Ovary (tissue), 10 donors: ENCODE measurements at regions of chr10 and their contacts with region 1.

Region 1: DNA sequence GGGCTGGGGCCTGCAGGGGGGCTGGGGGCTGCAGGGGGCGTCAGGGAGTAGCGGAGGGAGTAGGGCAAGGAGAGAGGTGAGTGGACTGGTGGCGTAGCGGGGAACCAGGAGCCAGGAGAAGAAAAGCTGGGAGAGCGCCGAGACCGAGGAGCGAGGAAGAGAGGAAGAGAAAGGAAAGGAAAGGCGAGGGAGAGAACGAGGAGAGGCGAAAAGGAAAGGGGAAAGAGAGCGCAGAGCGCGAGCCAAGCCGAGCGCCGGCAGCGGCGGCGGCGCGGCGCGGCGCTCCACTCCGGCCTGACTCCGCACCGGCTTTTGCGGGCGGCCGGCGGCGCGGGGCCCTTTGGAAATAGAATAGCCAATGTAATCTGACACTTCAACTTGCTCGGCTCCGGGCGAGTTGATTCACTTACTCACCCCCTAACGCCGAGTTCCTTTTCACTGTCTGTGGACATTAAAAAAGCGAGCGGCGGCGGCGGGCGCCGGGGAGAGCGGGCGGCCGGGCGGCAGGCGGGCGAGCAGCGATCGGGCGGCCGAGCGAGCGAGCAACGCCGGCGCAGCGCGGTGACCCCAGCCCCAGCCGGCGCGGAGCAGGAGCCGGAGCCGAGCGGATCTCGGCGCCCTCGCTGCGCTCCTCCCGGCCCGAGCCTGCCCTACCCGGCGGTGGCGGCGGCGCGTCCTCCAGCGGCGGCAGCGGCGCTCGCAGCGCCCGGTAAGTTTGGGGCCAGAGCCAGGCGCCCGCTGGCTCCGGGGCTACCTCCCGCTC is at the start of gene ZMIZ1:
- DNase-seq: peak; percentile 87 to 92 (median 91)
- H3K4me3 ChIP-seq: peak within 1 kb of the TSS; percentile 56
- H3K27ac ChIP-seq: peak within 1 kb of the TSS; percentile 86 to 89
- H3K4me1 ChIP-seq: peaks cover 20% of the 10 kb centered on the region
- H3K27me3 ChIP-seq: no peaks in the 10 kb centered on the region
- CTCF ChIP-seq: no peak
- EP300 ChIP-seq: no peak
- POLR2A ChIP-seq: peak; percentile 83
- total RNA-seq, gene ZMIZ1: 30.3 to 117 (median 86.3) TPM

Region 2: GRCh38 chr10:78211561-78212051 is 857.1 kb before region 1 on chr10:
- intact Hi-C with region 1: loop called in 2 of 4 experiments (anchors 10 kb)
- DNase-seq: peak; percentile 52 to 69 (median 58)
- H3K4me3 ChIP-seq: no peak overlapping the region
- H3K27ac ChIP-seq: no peak overlapping the region
- H3K4me1 ChIP-seq: peaks cover 14% of the 10 kb centered on the region
- H3K27me3 ChIP-seq: no peaks in the 10 kb centered on the region
- CTCF ChIP-seq: peak in 2 of 3 donors; percentile 35 to 43
- EP300 ChIP-seq: no peak
- POLR2A ChIP-seq: no peak

Region 3: DNA sequence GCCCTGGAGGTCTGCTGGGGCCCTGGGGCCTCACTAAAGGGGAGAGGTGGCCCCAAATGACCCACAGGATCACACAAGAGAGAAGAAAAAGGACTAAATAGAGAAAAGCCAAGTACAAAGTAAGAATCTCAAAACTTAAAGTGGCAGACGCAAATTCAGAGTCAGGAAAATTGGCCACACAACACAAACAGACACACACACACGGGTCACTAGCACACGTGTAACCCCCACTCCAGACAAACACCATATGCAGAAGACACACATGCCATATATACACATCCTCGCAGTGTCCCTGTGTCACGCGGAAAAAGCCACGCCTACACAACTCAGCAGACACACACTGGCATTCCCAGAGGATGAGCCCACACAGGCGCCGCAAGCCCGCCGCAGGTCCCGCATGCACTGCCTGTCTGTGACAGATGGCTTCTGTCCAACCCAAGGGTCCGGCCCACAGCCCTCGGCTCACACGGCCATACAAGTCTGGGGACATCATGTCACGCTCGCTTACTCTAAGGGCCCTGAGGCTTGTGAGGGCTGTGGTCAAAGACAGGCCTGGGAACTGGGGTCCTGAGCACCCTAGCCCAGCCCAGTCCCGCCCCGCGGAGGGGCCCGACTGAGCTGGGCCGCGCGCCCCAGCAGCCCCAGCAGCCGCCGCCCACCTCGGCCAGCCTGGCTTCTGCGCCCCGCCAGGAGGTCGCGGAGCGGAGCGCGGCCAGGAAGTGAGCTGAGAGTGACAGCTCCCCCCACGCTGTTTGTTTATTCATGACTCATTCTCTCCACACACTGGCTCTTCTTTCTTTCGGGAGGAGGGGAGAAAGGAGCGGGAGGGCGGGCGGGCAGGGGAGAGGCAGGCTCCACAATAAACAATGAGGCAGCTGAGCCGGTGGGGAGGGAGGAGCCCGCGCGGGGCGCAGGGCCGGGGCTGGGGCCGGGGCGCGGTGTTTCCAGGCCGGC is 95.5 kb before region 1 on chr10:
- intact Hi-C with region 1: loop called (anchors 2 to 10 kb)
- DNase-seq: peak in 4 of 5 donors; percentile 66 to 86 (median 79)
- H3K4me3 ChIP-seq: peak overlapping the region; percentile 50
- H3K27ac ChIP-seq: peak overlapping the region; percentile 92 to 95
- H3K4me1 ChIP-seq: peaks cover 26% of the 10 kb centered on the region
- H3K27me3 ChIP-seq: no peaks in the 10 kb centered on the region
- CTCF ChIP-seq: peak in 1 of 3 donors; percentile 35
- EP300 ChIP-seq: no peak
- POLR2A ChIP-seq: peak; percentile 34

Region 4: DNA sequence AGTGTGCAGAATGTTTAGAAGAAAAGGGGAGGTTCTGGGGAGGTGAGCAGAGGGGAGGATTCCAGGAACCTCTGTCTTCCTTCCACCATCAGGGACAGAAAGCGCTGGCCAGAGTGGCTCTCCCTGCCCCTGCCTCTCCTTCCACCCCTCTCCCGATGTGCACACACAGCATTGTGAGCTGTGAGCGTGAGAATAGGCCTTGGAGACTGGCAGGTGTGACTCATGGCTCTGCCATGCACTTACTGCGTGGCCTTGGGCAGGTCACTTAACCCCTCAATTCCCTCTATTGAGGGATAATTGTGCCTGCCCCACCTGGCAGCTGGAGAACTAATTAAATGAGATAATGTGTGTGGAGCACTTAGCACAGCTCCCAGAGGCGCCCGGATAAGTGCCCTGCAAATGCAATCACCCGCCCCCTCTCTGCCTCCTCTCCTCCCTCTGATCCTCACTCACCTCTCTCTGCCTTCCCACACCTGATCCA is 115.4 kb after region 1 on chr10:
- intact Hi-C with region 1: loop called in 1 of 4 experiments (anchors 2 kb)
- DNase-seq: peak in 1 of 5 donors; percentile 42
- H3K4me3 ChIP-seq: no peak overlapping the region
- H3K27ac ChIP-seq: peak overlapping the region in 1 of 2 donors; percentile 88
- H3K4me1 ChIP-seq: peaks cover 67% of the 10 kb centered on the region
- H3K27me3 ChIP-seq: no peaks in the 10 kb centered on the region
- CTCF ChIP-seq: no peak
- EP300 ChIP-seq: no peak
- POLR2A ChIP-seq: no peak